ENCODE measurements at regions of chr5 and their contacts with region 1.

Region 1: DNA sequence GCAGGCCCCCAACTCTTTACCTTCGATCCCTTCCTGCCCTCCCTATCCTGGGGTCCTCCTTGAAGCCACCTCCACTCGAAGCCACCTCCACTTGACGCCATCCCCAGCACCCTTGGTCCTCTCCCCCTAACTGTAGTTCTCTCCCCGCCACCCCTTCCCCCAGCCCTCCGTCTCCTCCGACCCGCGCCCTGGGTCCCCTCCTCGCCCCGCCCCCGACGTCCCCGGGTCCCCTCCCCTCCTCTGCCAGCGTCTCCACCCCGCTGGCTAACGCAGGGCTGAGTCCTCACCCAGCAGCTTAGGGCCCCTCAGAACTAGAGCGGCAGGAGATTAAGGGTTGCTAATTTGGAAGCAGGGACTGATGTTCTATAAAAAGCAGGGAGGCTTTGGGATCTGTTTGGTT is 30.6 kb upstream of the ANKRD33B start:
- DNase-seq: no peak
- H3K4me3 ChIP-seq: no peak overlapping the region
- H3K27ac ChIP-seq: no peak overlapping the region
- H3K4me1 ChIP-seq: peaks cover 0 to 5% (median 1%) of the 10 kb centered on the region in 4 donors
- H3K27me3 ChIP-seq: peaks cover 12% of the 10 kb centered on the region
- CTCF ChIP-seq: no peak
- EP300 ChIP-seq: no peak
- POLR2A ChIP-seq: no peak

Region 2: GRCh38 chr5:10364186-10364683 is 169.0 kb before region 1 on chr5:
- in situ Hi-C with region 1: no loop called
- intact Hi-C with region 1: no loop called
- DNase-seq: no peak
- H3K4me3 ChIP-seq: no peak overlapping the region
- H3K27ac ChIP-seq: no peak overlapping the region
- H3K4me1 ChIP-seq: peaks cover 18 to 83% (median 23%) of the 10 kb centered on the region in 4 donors
- H3K27me3 ChIP-seq: no peaks in the 10 kb centered on the region
- CTCF ChIP-seq: peak in 3 of 5 experiments; percentile 34 to 44 (median 40)
- EP300 ChIP-seq: no peak
- POLR2A ChIP-seq: no peak

Region 3: DNA sequence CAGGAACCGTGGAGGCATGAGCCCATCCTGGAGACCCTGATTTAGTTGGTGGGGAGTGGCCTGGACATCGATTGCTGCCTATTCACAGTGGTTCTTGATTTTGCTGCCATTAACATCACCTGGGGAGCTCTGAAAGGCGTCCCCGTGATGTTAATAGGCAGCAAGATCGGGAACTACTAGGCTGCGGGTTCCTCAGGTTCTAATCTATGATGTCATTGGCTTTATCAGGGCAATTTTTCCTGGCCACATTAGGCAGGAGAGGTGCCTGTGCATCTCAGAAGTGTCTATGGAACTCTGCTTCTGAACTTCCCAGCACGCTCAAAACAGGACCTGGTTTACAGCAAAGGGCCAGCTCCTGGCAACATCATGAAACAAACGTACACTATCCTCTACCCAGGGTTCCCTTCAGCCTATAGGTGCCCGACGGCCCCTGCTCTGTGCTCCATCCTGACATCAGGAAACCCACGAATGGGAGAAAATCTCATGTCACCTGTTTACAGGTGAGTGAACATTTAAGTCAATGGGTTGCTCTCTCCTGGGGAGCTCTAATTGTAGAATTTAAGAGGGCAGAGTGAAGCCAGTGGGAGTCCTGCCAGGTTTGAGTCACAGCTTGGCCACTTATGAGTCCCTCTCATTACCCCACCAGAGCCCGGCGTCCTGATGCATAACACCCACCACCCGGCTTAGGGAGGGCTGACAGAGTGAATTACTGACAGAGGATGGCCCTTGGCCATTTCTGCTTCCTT is 42.1 kb before region 1 on chr5:
- in situ Hi-C with region 1: no loop called
- intact Hi-C with region 1: loop called (anchors 1 kb)
- DNase-seq: no peak
- H3K4me3 ChIP-seq: no peak overlapping the region
- H3K27ac ChIP-seq: no peak overlapping the region
- H3K4me1 ChIP-seq: no peaks in the 10 kb centered on the region
- H3K27me3 ChIP-seq: peaks cover 3% of the 10 kb centered on the region
- CTCF ChIP-seq: no peak
- EP300 ChIP-seq: no peak
- POLR2A ChIP-seq: no peak

Region 4: DNA sequence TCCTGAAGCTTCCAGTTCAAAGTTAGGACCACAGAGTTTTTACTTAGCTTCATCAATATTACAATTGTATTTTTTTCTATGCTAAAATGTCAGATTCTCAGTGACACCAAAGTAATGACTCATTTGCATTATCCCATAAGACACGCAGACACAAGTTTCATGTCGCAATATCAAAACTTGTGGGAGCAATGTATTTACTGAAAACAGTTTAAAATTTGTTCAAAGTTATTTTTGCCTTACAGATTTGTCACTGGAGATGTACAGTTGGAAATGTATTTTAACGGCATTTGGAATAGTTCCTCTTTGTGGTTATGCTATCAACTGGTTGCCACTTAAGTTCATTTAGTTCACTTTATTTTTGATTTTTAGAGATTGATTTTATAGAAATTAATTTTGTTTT is 264.0 kb after region 1 on chr5:
- in situ Hi-C with region 1: no loop called
- intact Hi-C with region 1: no loop called
- DNase-seq: no peak
- H3K4me3 ChIP-seq: no peak overlapping the region
- H3K27ac ChIP-seq: no peak overlapping the region
- H3K4me1 ChIP-seq: no peaks in the 10 kb centered on the region
- H3K27me3 ChIP-seq: peaks cover 3% of the 10 kb centered on the region
- CTCF ChIP-seq: no peak
- EP300 ChIP-seq: no peak
- POLR2A ChIP-seq: no peak